ENCODE measurements at regions of chr1 and their contacts with region 1.

Region 1: GRCh38 chr1:70617728-70618127 is 206.7 kb downstream of the CTH start:
- DNase-seq: no peak
- ATAC-seq: no peak
- H3K4me3 ChIP-seq: no peak overlapping the region
- H3K27ac ChIP-seq: no peak overlapping the region
- H3K4me1 ChIP-seq: no peaks in the 10 kb centered on the region
- H3K27me3 ChIP-seq: no peaks in the 10 kb centered on the region
- CTCF ChIP-seq: no peak
- EP300 ChIP-seq: no peak
- POLR2A ChIP-seq: no peak
- RAD21 ChIP-seq: no peak

Region 2: GRCh38 chr1:70499695-70500094 is 118.0 kb before region 1 on chr1:
- CTCF ChIA-PET with region 1: no interaction called
- POLR2A ChIA-PET with region 1: no interaction called
- RAD21 ChIA-PET with region 1: no interaction called
- SMC1A ChIA-PET with region 1: no interaction called
- in situ Hi-C with region 1: no loop called
- intact Hi-C with region 1: no loop called
- DNase-seq: no peak
- ATAC-seq: no peak
- H3K4me3 ChIP-seq: no peak overlapping the region
- H3K27ac ChIP-seq: no peak overlapping the region
- H3K4me1 ChIP-seq: peaks cover 3% of the 10 kb centered on the region; the same call in 1 of the 2 replicates
- H3K27me3 ChIP-seq: no peaks in the 10 kb centered on the region
- CTCF ChIP-seq: no peak
- EP300 ChIP-seq: no peak
- POLR2A ChIP-seq: no peak
- RAD21 ChIP-seq: no peak

Region 3: DNA sequence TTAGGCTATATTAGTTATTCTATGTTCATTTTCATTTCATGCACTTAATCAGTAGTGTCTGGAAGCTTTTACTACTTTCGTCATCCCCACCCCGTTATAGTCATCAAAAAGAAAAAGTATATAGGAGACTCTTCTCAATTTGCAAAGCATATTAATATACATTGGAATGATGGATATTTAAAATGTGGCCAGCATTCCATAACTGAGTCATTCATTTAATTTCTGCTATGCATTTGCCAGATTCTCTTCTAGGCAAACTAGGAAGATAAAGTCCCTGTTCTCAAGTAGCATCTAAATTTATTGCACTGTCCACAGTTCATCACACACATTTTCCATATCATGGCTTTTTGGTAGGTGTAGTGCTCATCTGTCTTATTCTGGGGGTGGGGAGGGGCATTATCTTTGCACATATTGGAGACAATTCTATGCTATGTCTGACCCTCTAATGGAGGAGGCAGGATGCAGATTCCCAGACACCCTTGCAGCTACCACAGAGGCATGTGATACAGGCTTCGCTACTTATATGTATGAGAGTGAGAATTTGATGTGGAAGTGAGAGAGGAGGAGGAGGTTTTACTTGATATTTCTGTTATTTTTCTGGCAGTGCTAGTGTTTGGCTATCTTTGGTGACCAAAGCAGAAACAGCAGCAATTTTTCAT is 80.9 kb before region 1 on chr1:
- CTCF ChIA-PET with region 1: no interaction called
- POLR2A ChIA-PET with region 1: no interaction called
- RAD21 ChIA-PET with region 1: no interaction called
- SMC1A ChIA-PET with region 1: no interaction called
- in situ Hi-C with region 1: no loop called
- intact Hi-C with region 1: no loop called
- DNase-seq: no peak
- ATAC-seq: no peak
- H3K4me3 ChIP-seq: no peak overlapping the region
- H3K27ac ChIP-seq: no peak overlapping the region
- H3K4me1 ChIP-seq: no peaks in the 10 kb centered on the region
- H3K27me3 ChIP-seq: no peaks in the 10 kb centered on the region
- CTCF ChIP-seq: no peak
- EP300 ChIP-seq: no peak
- POLR2A ChIP-seq: no peak
- RAD21 ChIP-seq: no peak

Region 4: DNA sequence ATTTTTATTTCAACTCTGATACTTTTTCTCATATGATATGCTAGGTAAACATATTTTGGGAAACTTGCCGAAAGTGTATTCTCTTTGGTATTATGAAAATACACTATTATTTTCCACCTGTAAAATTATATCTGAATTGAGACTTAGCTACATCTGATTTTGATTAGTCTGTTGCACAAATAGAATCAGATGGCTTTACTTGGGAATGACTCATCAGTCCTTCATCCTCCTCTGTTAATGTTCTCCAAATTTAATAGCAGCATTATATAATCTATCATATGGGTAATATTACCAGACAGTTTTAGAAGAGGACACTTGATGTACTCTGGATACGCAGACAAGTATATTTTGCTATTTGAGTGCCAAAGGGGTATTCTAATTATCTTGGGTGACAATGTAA is 38.6 kb after region 1 on chr1:
- CTCF ChIA-PET with region 1: no interaction called
- POLR2A ChIA-PET with region 1: interaction called, 10 read pairs
- RAD21 ChIA-PET with region 1: no interaction called
- SMC1A ChIA-PET with region 1: no interaction called
- in situ Hi-C with region 1: no loop called
- intact Hi-C with region 1: no loop called
- DNase-seq: no peak
- ATAC-seq: no peak
- H3K4me3 ChIP-seq: no peak overlapping the region
- H3K27ac ChIP-seq: no peak overlapping the region
- H3K4me1 ChIP-seq: no peaks in the 10 kb centered on the region
- H3K27me3 ChIP-seq: no peaks in the 10 kb centered on the region
- CTCF ChIP-seq: no peak
- EP300 ChIP-seq: no peak
- POLR2A ChIP-seq: no peak
- RAD21 ChIP-seq: no peak

Region 5: GRCh38 chr1:70718086-70718630 is 100.4 kb after region 1 on chr1:
- CTCF ChIA-PET with region 1: no interaction called
- POLR2A ChIA-PET with region 1: no interaction called
- RAD21 ChIA-PET with region 1: no interaction called
- SMC1A ChIA-PET with region 1: no interaction called
- in situ Hi-C with region 1: no loop called
- intact Hi-C with region 1: no loop called
- DNase-seq: no peak
- ATAC-seq: no peak
- H3K4me3 ChIP-seq: no peak overlapping the region
- H3K27ac ChIP-seq: no peak overlapping the region
- H3K4me1 ChIP-seq: no peaks in the 10 kb centered on the region
- H3K27me3 ChIP-seq: no peaks in the 10 kb centered on the region
- CTCF ChIP-seq: no peak
- EP300 ChIP-seq: no peak
- POLR2A ChIP-seq: no peak
- RAD21 ChIP-seq: no peak